ENCODE measurements at regions of chr7 and their contacts with region 1.

Region 1: GRCh38 chr7:142711746-142712619 is 37.3 kb upstream of the PRSS1 start:
- DNase-seq: peak; percentile 70
- ATAC-seq: peak; percentile 83
- H3K4me3 Mint-ChIP-seq: peak overlapping the region; percentile 74
- H3K27ac Mint-ChIP-seq: peak overlapping the region; percentile 95
- H3K4me1 Mint-ChIP-seq: peaks cover 84% of the 10 kb centered on the region
- H3K27me3 Mint-ChIP-seq: no peaks in the 10 kb centered on the region

Region 2: GRCh38 chr7:142063551-142064442 is 648.2 kb before region 1 on chr7:
- CTCF ChIA-PET with region 1: no interaction called
- POLR2A ChIA-PET with region 1: no interaction called
- DNase-seq: no peak
- ATAC-seq: no peak
- H3K4me3 Mint-ChIP-seq: no peak overlapping the region
- H3K27ac Mint-ChIP-seq: no peak overlapping the region
- H3K4me1 Mint-ChIP-seq: no peaks in the 10 kb centered on the region
- H3K27me3 Mint-ChIP-seq: peaks cover 2% of the 10 kb centered on the region

Region 3: DNA sequence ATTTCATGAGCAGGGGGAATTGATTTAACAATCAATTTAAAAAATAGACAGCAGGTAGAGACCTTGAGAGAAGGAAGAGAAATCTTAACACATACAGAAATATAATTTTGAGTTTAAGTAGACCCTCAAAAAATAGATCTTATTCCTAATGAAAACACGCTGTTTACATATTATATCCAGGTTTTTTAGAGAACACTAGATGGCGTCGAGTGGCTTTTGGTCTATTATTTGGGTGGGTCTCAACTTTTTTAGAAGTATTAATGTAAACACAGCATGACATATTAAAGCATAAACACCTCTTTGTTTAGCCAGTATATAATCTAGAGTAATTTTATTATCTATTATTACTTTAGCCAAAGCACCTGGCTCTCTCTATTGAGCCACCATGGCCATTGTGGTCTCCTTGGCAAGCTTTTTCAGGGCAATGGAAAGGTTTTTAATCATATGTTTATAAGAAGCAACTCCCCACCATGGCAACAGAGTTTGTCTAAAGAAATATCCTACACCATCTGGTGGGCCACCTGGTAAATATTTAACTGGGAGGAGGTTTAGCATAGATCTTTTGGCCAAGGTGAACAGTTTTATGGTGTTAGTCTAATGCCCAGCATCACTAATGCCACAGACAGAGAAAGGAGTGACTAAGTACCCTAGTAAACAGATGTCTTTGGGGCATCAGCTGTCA is 22.4 kb before region 1 on chr7:
- CTCF ChIA-PET with region 1: interaction called, 21 read pairs
- POLR2A ChIA-PET with region 1: interaction called, 3 read pairs
- DNase-seq: no peak
- ATAC-seq: peak; percentile 10
- H3K4me3 Mint-ChIP-seq: no peak overlapping the region
- H3K27ac Mint-ChIP-seq: no peak overlapping the region
- H3K4me1 Mint-ChIP-seq: peaks cover 44% of the 10 kb centered on the region
- H3K27me3 Mint-ChIP-seq: no peaks in the 10 kb centered on the region

Measured in activated CD8-positive, alpha-beta T cell treated with anti-CD3 and anti-CD28 coated beads, Interleukin-2, amount 10 ng/mL, durations not matched to agents 7 days and 5 days (primary cell).